ENCODE measurements at regions of chr2 and their contacts with region 1.

Region 1: GRCh38 chr2:235287375-235287733 is 206.5 kb upstream of the AGAP1 start:
- DNase-seq: no peak
- H3K4me3 ChIP-seq: no peak overlapping the region
- H3K27ac ChIP-seq: no peak overlapping the region
- H3K4me1 ChIP-seq: no peaks in the 10 kb centered on the region
- H3K27me3 ChIP-seq: no peaks in the 10 kb centered on the region
- CTCF ChIP-seq: no peak

Region 2: GRCh38 chr2:235343869-235344268 is 56.5 kb after region 1 on chr2:
- intact Hi-C with region 1: loop called (anchors 2 kb)
- DNase-seq: no peak
- H3K4me3 ChIP-seq: no peak overlapping the region
- H3K27ac ChIP-seq: no peak overlapping the region
- H3K4me1 ChIP-seq: no peaks in the 10 kb centered on the region
- H3K27me3 ChIP-seq: peaks cover 0 to 13% of the 10 kb centered on the region in 2 donors
- CTCF ChIP-seq: no peak

Region 3: DNA sequence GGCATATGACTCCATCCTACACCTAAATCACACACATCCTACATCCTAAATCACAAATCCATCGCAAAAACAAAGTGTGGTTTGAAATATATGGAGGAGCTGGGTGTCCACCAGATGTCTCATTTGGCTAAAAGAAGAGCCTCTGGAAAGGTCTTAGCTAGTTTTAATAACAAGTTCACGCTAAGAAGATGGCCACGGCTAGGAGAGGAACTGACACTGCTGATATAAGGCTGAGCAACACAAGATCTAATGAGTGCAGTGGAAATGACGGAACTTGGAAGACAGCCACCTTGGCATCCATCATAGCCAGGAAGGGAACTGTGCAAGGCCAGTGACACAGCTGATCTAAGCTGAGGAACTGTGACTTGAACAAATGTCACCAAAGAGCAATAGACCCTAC is 146.5 kb after region 1 on chr2:
- intact Hi-C with region 1: no loop called
- DNase-seq: peak; percentile 81 to 83
- H3K4me3 ChIP-seq: peak overlapping the region in 1 of 2 donors; percentile 47
- H3K27ac ChIP-seq: peak overlapping the region; percentile 67 to 77
- H3K4me1 ChIP-seq: peaks cover 0 to 20% (median 15%) of the 10 kb centered on the region in 4 donors
- H3K27me3 ChIP-seq: no peaks in the 10 kb centered on the region
- CTCF ChIP-seq: peak in 1 of 2 experiments; percentile 13